Head of caudate nucleus (tissue), 42 donors: ENCODE measurements at regions of chr2 and their contacts with region 1.

Region 1: GRCh38 chr2:164737612-164738081 is 104.0 kb downstream of the COBLL1 start:
- DNase-seq: peak in 40 of 42 donors; percentile 11 to 74 (median 38)

Region 2: GRCh38 chr2:164917296-164917903 is 179.8 kb after region 1 on chr2:
- intact Hi-C with region 1: loop called (anchors 10 kb)
- DNase-seq: peak in 29 of 42 donors; percentile 4 to 53 (median 23)